WTC11 (cell line): ENCODE measurements at regions of chr12 and their contacts with region 1.

Region 1: GRCh38 chr12:15584366-15585041 is 204.7 kb downstream of the EPS8 start:
- DNase-seq: no peak
- ATAC-seq: peak; percentile 62; the same call in 1 of the 2 replicates
- H3K4me3 Mint-ChIP-seq: no peak overlapping the region
- H3K27ac Mint-ChIP-seq: no peak overlapping the region
- H3K4me1 Mint-ChIP-seq: peaks cover 14% of the 10 kb centered on the region
- H3K27me3 Mint-ChIP-seq: no peaks in the 10 kb centered on the region; the same call in none of the 2 replicates
- CTCF ChIP-seq: 0 out of 2 replicates have a peak, but pooled peaks have one; percentile 18

Region 2: DNA sequence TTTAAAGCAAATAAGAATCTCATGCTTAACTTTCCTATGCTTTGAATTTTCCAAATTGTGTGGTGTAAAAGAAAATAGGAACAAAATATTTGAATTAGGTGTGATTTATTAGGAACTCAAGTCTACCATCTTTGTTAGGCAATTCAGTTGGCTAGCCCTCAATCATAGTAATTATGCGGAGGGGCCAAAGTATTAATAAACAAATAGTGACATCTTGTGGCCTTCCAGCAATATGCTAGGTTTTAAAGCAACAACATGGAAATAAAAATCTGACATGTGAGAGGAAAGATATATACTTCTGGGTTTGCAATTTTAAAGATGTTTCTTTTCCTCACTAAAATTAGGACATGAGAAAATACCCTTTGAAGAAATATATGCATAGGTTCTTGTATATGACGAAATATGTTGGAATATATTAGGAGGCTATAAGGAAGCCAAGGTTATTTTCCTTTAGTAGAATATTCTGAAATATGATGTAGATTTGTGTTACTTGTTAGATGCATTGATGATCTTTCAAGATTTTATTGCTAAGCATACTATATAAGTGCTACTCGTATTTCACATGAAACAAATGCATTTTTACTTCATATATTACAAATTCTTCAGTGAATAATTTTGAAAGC is 61.8 kb before region 1 on chr12:
- CTCF ChIA-PET with region 1: interaction called, 10 read pairs
- POLR2A ChIA-PET with region 1: no interaction called
- DNase-seq: no peak
- ATAC-seq: peak; percentile 29; the same call in 1 of the 2 replicates
- H3K4me3 Mint-ChIP-seq: no peak overlapping the region
- H3K27ac Mint-ChIP-seq: no peak overlapping the region
- H3K4me1 Mint-ChIP-seq: peaks cover 16% of the 10 kb centered on the region
- H3K27me3 Mint-ChIP-seq: no peaks in the 10 kb centered on the region; the same call in 1 of the 2 replicates
- CTCF ChIP-seq: no peak

Region 3: DNA sequence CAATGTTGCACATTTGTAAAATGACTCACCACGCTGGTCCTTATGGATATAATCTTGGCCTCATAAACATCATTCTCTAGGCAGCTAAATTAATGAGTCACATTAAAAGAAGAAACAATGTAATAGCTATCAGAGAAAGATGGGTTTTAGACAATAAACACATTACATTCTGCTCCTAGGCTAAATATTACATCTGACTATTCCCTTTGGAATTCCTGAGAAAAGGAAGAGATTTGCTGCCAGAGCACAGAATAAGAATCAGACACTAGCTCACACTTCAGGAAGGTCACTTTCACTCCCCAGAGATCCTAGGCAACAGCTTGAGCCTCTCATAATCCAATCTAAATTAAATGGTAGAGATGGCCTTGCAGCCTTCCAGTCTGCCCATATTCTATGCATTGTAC is 44.0 kb before region 1 on chr12:
- CTCF ChIA-PET with region 1: interaction called, 14 read pairs
- POLR2A ChIA-PET with region 1: interaction called, 7 read pairs
- DNase-seq: no peak
- ATAC-seq: no peak
- H3K4me3 Mint-ChIP-seq: no peak overlapping the region
- H3K27ac Mint-ChIP-seq: no peak overlapping the region
- H3K4me1 Mint-ChIP-seq: no peaks in the 10 kb centered on the region
- H3K27me3 Mint-ChIP-seq: no peaks in the 10 kb centered on the region
- CTCF ChIP-seq: no peak

Region 4: DNA sequence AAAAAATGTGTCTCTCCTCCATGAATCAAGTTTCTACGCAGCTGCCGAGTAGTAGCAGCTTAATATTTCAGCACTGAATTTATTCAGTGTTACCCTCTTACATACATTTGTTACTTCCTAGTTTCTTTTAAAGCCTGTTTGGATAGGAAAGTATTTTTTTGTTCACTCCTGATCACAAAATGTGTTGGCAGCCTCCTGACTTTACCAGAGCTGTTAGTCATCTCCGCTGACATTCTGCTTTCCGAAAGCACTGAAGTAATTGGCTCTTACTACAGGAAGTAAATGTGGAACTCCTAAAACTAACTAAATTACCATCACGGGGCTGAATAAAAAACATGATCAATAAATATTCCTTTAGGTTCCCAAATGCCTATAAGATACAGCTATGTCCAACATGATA is 20.8 kb before region 1 on chr12:
- CTCF ChIA-PET with region 1: interaction called, 25 read pairs
- POLR2A ChIA-PET with region 1: no interaction called
- DNase-seq: no peak
- ATAC-seq: no peak
- H3K4me3 Mint-ChIP-seq: no peak overlapping the region
- H3K27ac Mint-ChIP-seq: 0 out of 2 replicates have a peak overlapping the region, but pooled peaks have one; percentile 2
- H3K4me1 Mint-ChIP-seq: peaks cover 19% of the 10 kb centered on the region
- H3K27me3 Mint-ChIP-seq: no peaks in the 10 kb centered on the region
- CTCF ChIP-seq: no peak

Region 5: DNA sequence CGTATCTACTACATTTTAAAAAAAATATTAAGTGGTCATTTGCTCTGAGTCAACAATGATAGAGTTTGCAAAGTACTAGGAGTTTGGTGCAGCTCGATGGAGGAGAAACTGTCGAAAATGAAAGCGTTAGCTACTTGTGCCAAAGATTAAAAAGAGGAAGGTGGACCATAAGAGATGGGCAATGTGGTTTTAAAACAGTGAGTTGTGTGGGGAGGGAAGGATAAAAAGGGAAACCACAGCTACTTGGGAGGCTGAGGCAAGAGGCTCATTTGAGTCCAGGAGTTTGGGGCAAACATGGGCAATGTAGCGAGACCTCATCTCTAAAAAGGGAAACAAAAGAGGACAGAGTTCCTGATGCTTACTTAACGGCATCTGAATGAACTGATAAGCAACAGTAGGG is 279.5 kb after region 1 on chr12:
- CTCF ChIA-PET with region 1: interaction called, 19 read pairs
- POLR2A ChIA-PET with region 1: no interaction called
- DNase-seq: no peak
- ATAC-seq: no peak
- H3K4me3 Mint-ChIP-seq: no peak overlapping the region
- H3K27ac Mint-ChIP-seq: 0 out of 2 replicates have a peak overlapping the region, but pooled peaks have one; percentile 58
- H3K4me1 Mint-ChIP-seq: peaks cover 25% of the 10 kb centered on the region
- H3K27me3 Mint-ChIP-seq: no peaks in the 10 kb centered on the region
- CTCF ChIP-seq: no peak